B cell (primary cell): ENCODE measurements at regions of chr1 and their contacts with region 1.

Region 1: GRCh38 chr1:75233302-75233929 is 99.2 kb downstream of the LHX8 start:
- DNase-seq: peak; percentile 57
- ATAC-seq: peak; percentile 69
- H3K4me3 ChIP-seq: no peak overlapping the region
- H3K4me3 Mint-ChIP-seq: no peak overlapping the region
- H3K27ac ChIP-seq: no peak overlapping the region
- H3K27ac Mint-ChIP-seq: no peak overlapping the region
- H3K4me1 ChIP-seq: no peaks in the 10 kb centered on the region
- H3K4me1 Mint-ChIP-seq: no peaks in the 10 kb centered on the region
- H3K27me3 ChIP-seq: no peaks in the 10 kb centered on the region
- H3K27me3 Mint-ChIP-seq: peaks cover 3% of the 10 kb centered on the region
- CTCF ChIP-seq: peak; percentile 85

Region 2: DNA sequence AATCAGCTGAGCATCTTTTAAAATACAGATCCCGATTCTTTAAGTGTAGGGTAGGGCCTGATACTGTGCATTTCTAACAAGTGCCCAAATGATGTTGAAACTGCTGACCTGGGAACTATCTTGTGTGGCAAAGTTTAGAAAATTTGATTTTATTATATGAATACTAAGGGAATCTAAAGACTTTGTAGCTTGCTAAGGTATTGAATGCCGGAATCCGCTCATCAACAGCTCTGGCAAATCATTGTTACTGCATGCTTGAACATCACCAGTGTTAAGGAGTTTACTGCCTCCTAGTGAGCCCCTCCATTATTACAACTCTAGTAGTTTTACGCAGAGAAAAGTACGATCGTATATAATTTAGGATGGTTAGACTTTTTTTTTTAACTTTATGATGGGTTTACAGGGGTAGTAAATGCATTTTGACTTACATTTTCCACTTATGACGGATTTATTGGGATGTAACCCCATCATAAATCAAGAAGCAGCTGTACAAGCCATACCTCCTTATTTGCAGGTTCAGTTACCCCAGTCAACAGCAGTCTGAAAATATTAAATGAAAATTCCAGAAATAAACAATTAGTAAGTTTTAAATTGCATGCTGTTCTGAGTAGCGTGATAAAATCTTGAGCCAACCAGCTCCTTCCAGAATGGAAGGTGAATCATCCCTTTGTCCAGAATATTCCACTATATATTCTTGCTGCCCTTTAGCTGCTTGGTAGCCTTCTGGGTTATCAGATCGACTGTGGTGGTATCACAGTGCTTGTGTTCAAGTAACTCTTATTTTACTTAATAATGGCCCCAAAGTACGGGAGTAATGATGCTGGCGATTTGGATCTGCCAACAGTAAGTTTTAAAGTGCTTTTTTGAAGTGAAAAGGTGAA is 499.6 kb before region 1 on chr1:
- CTCF ChIA-PET with region 1: no interaction called
- POLR2A ChIA-PET with region 1: no interaction called
- intact Hi-C with region 1: no loop called
- DNase-seq: peak; percentile 76
- ATAC-seq: peak; percentile 60
- H3K4me3 ChIP-seq: peak overlapping the region; percentile 71 to 96 (median 78)
- H3K4me3 Mint-ChIP-seq: peak overlapping the region; percentile 98
- H3K27ac ChIP-seq: peak overlapping the region; percentile 73
- H3K27ac Mint-ChIP-seq: peak overlapping the region; percentile 97
- H3K4me1 ChIP-seq: peaks cover 9 to 15% of the 10 kb centered on the region in 2 donors
- H3K4me1 Mint-ChIP-seq: peaks cover 31% of the 10 kb centered on the region
- H3K27me3 ChIP-seq: no peaks in the 10 kb centered on the region
- H3K27me3 Mint-ChIP-seq: no peaks in the 10 kb centered on the region
- CTCF ChIP-seq: peak; percentile 82

Region 3: GRCh38 chr1:75220072-75220471 is 13.3 kb before region 1 on chr1:
- CTCF ChIA-PET with region 1: interaction called, 18 read pairs
- POLR2A ChIA-PET with region 1: no interaction called
- intact Hi-C with region 1: no loop called
- DNase-seq: no peak
- ATAC-seq: no peak
- H3K4me3 ChIP-seq: no peak overlapping the region
- H3K4me3 Mint-ChIP-seq: no peak overlapping the region
- H3K27ac ChIP-seq: no peak overlapping the region
- H3K27ac Mint-ChIP-seq: no peak overlapping the region
- H3K4me1 ChIP-seq: no peaks in the 10 kb centered on the region
- H3K4me1 Mint-ChIP-seq: no peaks in the 10 kb centered on the region
- H3K27me3 ChIP-seq: no peaks in the 10 kb centered on the region
- H3K27me3 Mint-ChIP-seq: peaks cover 2% of the 10 kb centered on the region
- CTCF ChIP-seq: no peak

Region 4: GRCh38 chr1:75632350-75632949 is 399.0 kb after region 1 on chr1:
- CTCF ChIA-PET with region 1: interaction called, 70 read pairs
- POLR2A ChIA-PET with region 1: no interaction called
- intact Hi-C with region 1: loop called (anchors 1 kb)
- DNase-seq: peak; percentile 29
- ATAC-seq: no peak
- H3K4me3 ChIP-seq: no peak overlapping the region
- H3K4me3 Mint-ChIP-seq: no peak overlapping the region
- H3K27ac ChIP-seq: no peak overlapping the region
- H3K27ac Mint-ChIP-seq: no peak overlapping the region
- H3K4me1 ChIP-seq: no peaks in the 10 kb centered on the region
- H3K4me1 Mint-ChIP-seq: no peaks in the 10 kb centered on the region
- H3K27me3 ChIP-seq: peaks cover 0 to 4% (median 0%) of the 10 kb centered on the region in 4 experiments
- H3K27me3 Mint-ChIP-seq: peaks cover 21% of the 10 kb centered on the region
- CTCF ChIP-seq: peak; percentile 81